Stomach (tissue), 19 donors: ENCODE measurements at regions of chr2 and their contacts with region 1.

Region 1: GRCh38 chr2:64311948-64312621 is 141.9 kb upstream of the LGALSL start:
- DNase-seq: peak; percentile 75 to 93
- H3K4me3 ChIP-seq: peak overlapping the region in 1 of 4 donors; percentile 17
- H3K27ac ChIP-seq: peak overlapping the region in 3 of 5 donors; percentile 26 to 40 (median 40)
- H3K4me1 ChIP-seq: peaks cover 0 to 21% (median 17%) of the 10 kb centered on the region in 4 donors
- H3K27me3 ChIP-seq: no peaks in the 10 kb centered on the region
- CTCF ChIP-seq: peak in 5 of 7 experiments; percentile 18 to 60 (median 38)
- EP300 ChIP-seq: no peak
- POLR2A ChIP-seq: no peak

Region 2: GRCh38 chr2:64045938-64046337 is 266.1 kb before region 1 on chr2:
- intact Hi-C with region 1: loop called (anchors 5 kb)
- DNase-seq: no peak
- H3K4me3 ChIP-seq: no peak overlapping the region
- H3K27ac ChIP-seq: no peak overlapping the region
- H3K4me1 ChIP-seq: peaks cover 0 to 8% (median 0%) of the 10 kb centered on the region in 4 donors
- H3K27me3 ChIP-seq: no peaks in the 10 kb centered on the region
- CTCF ChIP-seq: no peak
- EP300 ChIP-seq: no peak
- POLR2A ChIP-seq: no peak

Region 3: GRCh38 chr2:64228126-64228678 is 83.9 kb before region 1 on chr2:
- intact Hi-C with region 1: no loop called
- DNase-seq: peak; percentile 75 to 95
- H3K4me3 ChIP-seq: peak overlapping the region; percentile 43 to 53 (median 48)
- H3K27ac ChIP-seq: peak overlapping the region; percentile 14 to 80 (median 76)
- H3K4me1 ChIP-seq: peaks cover 10 to 28% (median 17%) of the 10 kb centered on the region in 4 donors
- H3K27me3 ChIP-seq: no peaks in the 10 kb centered on the region
- CTCF ChIP-seq: no peak
- EP300 ChIP-seq: no peak
- POLR2A ChIP-seq: no peak